Left colon (tissue), 2 donors: ENCODE measurements at regions of chr22 and their contacts with region 1.

Region 1: GRCh38 chr22:35349704-35350538 is 31.0 kb upstream of the HMOX1 start:
- DNase-seq: no peak
- ATAC-seq: peak; percentile 13

Region 2: DNA sequence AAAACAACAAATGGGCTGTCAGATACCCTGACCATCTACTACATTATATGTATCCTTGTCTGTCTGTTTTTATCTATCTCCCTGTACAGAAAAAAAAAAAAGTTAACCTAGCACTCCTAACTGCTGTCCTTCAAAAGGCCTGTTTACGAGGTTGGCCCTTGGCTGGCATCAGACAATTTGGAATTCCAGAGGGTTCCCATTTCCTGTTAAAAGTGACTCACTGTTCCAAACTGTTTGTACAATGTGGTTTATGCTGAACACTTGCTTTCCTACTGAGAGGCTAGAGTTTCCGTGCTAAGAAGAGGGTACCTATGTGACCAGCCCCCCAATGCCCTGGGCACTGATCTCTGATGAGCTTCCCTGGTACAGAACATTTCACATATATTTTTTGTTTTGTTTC is 158.5 kb before region 1 on chr22:
- intact Hi-C with region 1: no loop called
- DNase-seq: no peak
- ATAC-seq: no peak

Region 3: GRCh38 chr22:35582861-35583670 is 233.1 kb after region 1 on chr22:
- intact Hi-C with region 1: loop called in 1 of 2 experiments (anchors 10 kb)
- DNase-seq: peak; percentile 45 to 66
- ATAC-seq: peak; percentile 62